Right lobe of liver (tissue), 6 donors: ENCODE measurements at regions of chr15 and their contacts with region 1.

Region 1: DNA sequence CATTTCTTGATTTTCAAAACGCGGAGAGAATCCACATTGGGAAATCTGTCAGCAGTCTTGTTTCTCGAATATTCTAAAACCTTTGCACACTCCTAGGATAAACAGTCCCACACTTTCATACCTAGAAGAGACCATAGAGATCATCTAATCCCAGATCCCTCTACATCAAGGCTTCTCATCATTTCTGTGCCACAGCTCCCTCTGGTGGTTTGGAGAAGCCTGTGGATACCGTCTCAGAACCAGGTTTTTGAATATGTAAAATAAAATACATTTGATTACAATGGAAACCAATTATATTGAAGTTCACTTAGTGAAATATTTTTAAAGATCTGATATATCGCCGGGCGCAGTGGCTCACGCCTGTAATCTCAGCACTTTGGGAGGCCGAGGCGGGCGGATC is 211.9 kb upstream of the GOLGA6L4 start:
- DNase-seq: no peak
- ATAC-seq: peak in 3 of 4 donors; percentile 49 to 62 (median 55)
- H3K4me3 ChIP-seq: no peak overlapping the region
- H3K27ac ChIP-seq: no peak overlapping the region
- H3K4me1 ChIP-seq: peaks cover 0 to 4% (median 0%) of the 10 kb centered on the region in 4 donors
- H3K27me3 ChIP-seq: no peaks in the 10 kb centered on the region
- CTCF ChIP-seq: peak; percentile 41 to 67 (median 58)
- POLR2A ChIP-seq: no peak

Region 2: GRCh38 chr15:83571820-83572707 is 451.6 kb before region 1 on chr15:
- intact Hi-C with region 1: loop called in 1 of 2 experiments (anchors 5 kb)
- DNase-seq: no peak
- ATAC-seq: peak; percentile 52 to 66 (median 60)
- H3K4me3 ChIP-seq: no peak overlapping the region
- H3K27ac ChIP-seq: no peak overlapping the region
- H3K4me1 ChIP-seq: no peaks in the 10 kb centered on the region
- H3K27me3 ChIP-seq: no peaks in the 10 kb centered on the region
- CTCF ChIP-seq: peak; percentile 40 to 70 (median 60)
- POLR2A ChIP-seq: no peak